ENCODE measurements at regions of chrX and their contacts with region 1.

Region 1: GRCh38 chrX:124045109-124045508 is 83.6 kb downstream of the STAG2 start:
- DNase-seq: no peak
- ATAC-seq: no peak
- H3K4me3 ChIP-seq: no peak overlapping the region
- H3K4me3 Mint-ChIP-seq: no peak overlapping the region
- H3K27ac ChIP-seq: no peak overlapping the region
- H3K27ac Mint-ChIP-seq: peak overlapping the region in 3 of 9 donors; percentile 3 to 63 (median 62)
- H3K4me1 ChIP-seq: peaks cover 0 to 3% of the 10 kb centered on the region in 2 donors
- H3K4me1 Mint-ChIP-seq: peaks cover 0 to 33% (median 15%) of the 10 kb centered on the region in 7 donors
- H3K27me3 ChIP-seq: no peaks in the 10 kb centered on the region
- H3K27me3 Mint-ChIP-seq: no peaks in the 10 kb centered on the region

Region 2: GRCh38 chrX:124098089-124098488 is 53.0 kb after region 1 on chrX:
- CTCF ChIA-PET with region 1: interaction called, 3 read pairs
- POLR2A ChIA-PET with region 1: interaction called, 4 read pairs
- intact Hi-C with region 1: loop called in 1 of 2 experiments (anchors 10 kb)
- DNase-seq: peak in 5 of 9 donors; percentile 8 to 34 (median 30)
- ATAC-seq: peak; percentile 55
- H3K4me3 ChIP-seq: no peak overlapping the region
- H3K4me3 Mint-ChIP-seq: no peak overlapping the region
- H3K27ac ChIP-seq: no peak overlapping the region
- H3K27ac Mint-ChIP-seq: no peak overlapping the region
- H3K4me1 ChIP-seq: no peaks in the 10 kb centered on the region
- H3K4me1 Mint-ChIP-seq: peaks cover 0 to 2% (median 0%) of the 10 kb centered on the region in 7 donors
- H3K27me3 ChIP-seq: no peaks in the 10 kb centered on the region
- H3K27me3 Mint-ChIP-seq: no peaks in the 10 kb centered on the region

Region 3: GRCh38 chrX:124274438-124275181 is 229.5 kb after region 1 on chrX:
- CTCF ChIA-PET with region 1: no interaction called
- POLR2A ChIA-PET with region 1: no interaction called
- intact Hi-C with region 1: no loop called
- DNase-seq: no peak
- ATAC-seq: no peak
- H3K4me3 ChIP-seq: no peak overlapping the region
- H3K4me3 Mint-ChIP-seq: no peak overlapping the region
- H3K27ac ChIP-seq: no peak overlapping the region
- H3K27ac Mint-ChIP-seq: peak overlapping the region in 2 of 9 donors; percentile 9 to 38
- H3K4me1 ChIP-seq: peaks cover 0 to 16% of the 10 kb centered on the region in 2 donors
- H3K4me1 Mint-ChIP-seq: peaks cover 0 to 7% (median 2%) of the 10 kb centered on the region in 7 donors
- H3K27me3 ChIP-seq: no peaks in the 10 kb centered on the region
- H3K27me3 Mint-ChIP-seq: no peaks in the 10 kb centered on the region

Region 4: GRCh38 chrX:125012585-125012984 is 967.5 kb after region 1 on chrX:
- CTCF ChIA-PET with region 1: no interaction called
- POLR2A ChIA-PET with region 1: no interaction called
- intact Hi-C with region 1: no loop called
- DNase-seq: no peak
- ATAC-seq: no peak
- H3K4me3 ChIP-seq: no peak overlapping the region
- H3K4me3 Mint-ChIP-seq: no peak overlapping the region
- H3K27ac ChIP-seq: no peak overlapping the region
- H3K27ac Mint-ChIP-seq: no peak overlapping the region
- H3K4me1 ChIP-seq: no peaks in the 10 kb centered on the region
- H3K4me1 Mint-ChIP-seq: no peaks in the 10 kb centered on the region
- H3K27me3 ChIP-seq: no peaks in the 10 kb centered on the region
- H3K27me3 Mint-ChIP-seq: no peaks in the 10 kb centered on the region

Measured in naive thymus-derived CD4-positive, alpha-beta T cell (primary cell).